HEK293T (cell line): ENCODE measurements at regions of chr11 and their contacts with region 1.

Region 1: DNA sequence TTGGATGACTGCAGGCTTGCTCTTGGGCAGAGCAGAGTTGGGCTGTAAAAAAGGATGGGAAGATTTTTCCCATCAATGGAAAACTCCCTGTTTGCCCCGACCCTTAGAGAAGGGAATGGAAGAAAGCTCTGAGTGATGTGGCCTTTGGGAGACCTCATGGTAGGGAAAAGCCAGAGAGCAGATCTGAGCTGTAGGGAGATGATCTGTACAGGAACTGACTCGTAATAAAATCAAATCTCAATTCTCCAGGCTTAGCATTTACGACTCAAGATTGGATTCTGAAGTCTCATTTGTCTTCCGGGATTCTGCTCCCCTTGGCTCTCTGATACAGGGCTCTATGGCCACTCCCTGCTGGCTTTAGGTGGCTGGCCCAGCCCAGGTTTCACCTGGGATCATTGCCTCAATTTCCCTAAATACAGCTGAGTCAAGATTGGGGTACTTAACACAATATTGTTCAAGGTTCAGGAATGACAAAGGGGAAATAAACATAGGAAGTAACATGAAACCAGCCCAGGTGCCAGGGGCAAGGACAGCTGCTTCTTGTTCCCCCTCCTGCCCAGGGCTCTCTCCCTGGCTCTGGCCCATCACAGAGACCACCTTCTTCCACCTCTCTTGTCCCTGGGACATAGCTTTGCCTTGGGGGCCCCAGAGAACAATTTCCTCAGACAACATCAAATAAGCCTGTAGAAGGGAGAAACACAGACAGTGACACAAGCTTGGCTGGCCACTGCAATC is 38.4 kb upstream of the THY1 start:
- DNase-seq: no peak

Region 2: DNA sequence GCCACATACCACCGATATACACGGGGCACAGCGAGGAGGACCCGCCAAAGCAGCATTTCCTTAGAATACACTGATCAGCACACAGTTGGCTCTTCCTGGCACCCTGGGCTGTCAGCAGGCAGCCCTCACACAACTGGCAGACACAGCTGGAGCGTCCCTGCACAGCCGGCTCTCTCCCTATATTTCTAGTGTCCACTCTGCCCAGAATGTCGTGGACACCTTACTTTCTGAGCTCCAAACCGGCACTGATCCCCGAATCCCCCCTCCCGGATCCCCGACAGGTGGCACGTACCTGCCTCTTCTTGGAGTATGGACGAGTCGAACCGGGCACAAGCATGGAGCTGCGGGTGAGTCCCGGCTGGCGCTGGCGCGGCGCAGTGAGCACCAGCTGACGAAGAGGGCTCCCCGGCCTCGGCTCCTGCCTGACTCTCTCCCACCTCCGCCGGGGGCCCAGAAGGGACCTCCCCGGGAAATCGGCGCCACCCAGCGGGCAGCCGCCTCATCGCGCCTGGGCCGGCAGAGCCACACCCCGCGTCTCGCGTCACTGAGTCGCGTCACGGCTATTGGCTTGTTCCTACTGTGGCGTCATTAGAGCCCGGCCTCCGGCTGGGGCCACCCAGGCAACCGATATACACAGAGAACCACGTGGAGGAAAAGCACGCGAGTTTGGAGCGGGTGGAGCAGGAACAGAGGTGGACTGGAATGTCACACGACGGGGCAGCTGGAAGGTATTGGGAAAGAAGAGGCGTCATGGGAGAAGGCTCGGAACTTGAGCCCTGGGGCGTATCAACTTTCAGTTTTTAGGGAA is 80.0 kb before region 1 on chr11 and contains the start of gene USP2:
- CTCF ChIA-PET with region 1: interaction called, 10 read pairs
- POLR2A ChIA-PET with region 1: no interaction called
- DNase-seq: peak; percentile 96